ENCODE measurements at regions of chr6 and their contacts with region 1.

Region 1: GRCh38 chr6:96777113-96777512 is 60.2 kb downstream of the GPR63 start:
- DNase-seq: no peak
- H3K4me3 ChIP-seq: no peak overlapping the region
- H3K4me3 Mint-ChIP-seq: no peak overlapping the region
- H3K27ac Mint-ChIP-seq: no peak overlapping the region
- H3K4me1 ChIP-seq: peaks cover 7% of the 10 kb centered on the region
- H3K4me1 Mint-ChIP-seq: no peaks in the 10 kb centered on the region
- H3K27me3 ChIP-seq: no peaks in the 10 kb centered on the region
- H3K27me3 Mint-ChIP-seq: peaks cover 3% of the 10 kb centered on the region
- CTCF ChIP-seq: no peak

Region 2: GRCh38 chr6:98539741-98540140 is 1762.6 kb after region 1 on chr6:
- CTCF ChIA-PET with region 1: no interaction called
- POLR2A ChIA-PET with region 1: no interaction called
- intact Hi-C with region 1: loop called (anchors 5 kb)
- DNase-seq: peak in 1 of 2 experiments; percentile 1
- H3K4me3 ChIP-seq: no peak overlapping the region
- H3K4me3 Mint-ChIP-seq: no peak overlapping the region
- H3K27ac Mint-ChIP-seq: no peak overlapping the region
- H3K4me1 ChIP-seq: no peaks in the 10 kb centered on the region
- H3K4me1 Mint-ChIP-seq: no peaks in the 10 kb centered on the region
- H3K27me3 ChIP-seq: no peaks in the 10 kb centered on the region
- H3K27me3 Mint-ChIP-seq: peaks cover 14% of the 10 kb centered on the region
- CTCF ChIP-seq: no peak